ENCODE measurements at regions of chr6 and their contacts with region 1.

Region 1: GRCh38 chr6:151675746-151676416 is 131.6 kb upstream of the ESR1 start:
- DNase-seq: peak; percentile 42
- H3K4me3 Mint-ChIP-seq: no peak overlapping the region
- H3K27ac Mint-ChIP-seq: no peak overlapping the region
- H3K4me1 Mint-ChIP-seq: peaks cover 14% of the 10 kb centered on the region
- H3K27me3 Mint-ChIP-seq: peaks cover 2% of the 10 kb centered on the region

Region 2: GRCh38 chr6:151553416-151554165 is 122.3 kb before region 1 on chr6:
- intact Hi-C with region 1: no loop called
- DNase-seq: no peak
- H3K4me3 Mint-ChIP-seq: no peak overlapping the region
- H3K27ac Mint-ChIP-seq: no peak overlapping the region
- H3K4me1 Mint-ChIP-seq: no peaks in the 10 kb centered on the region
- H3K27me3 Mint-ChIP-seq: no peaks in the 10 kb centered on the region

Region 3: GRCh38 chr6:152124429-152125074 is 448.7 kb after region 1 on chr6:
- intact Hi-C with region 1: loop called (anchors 1 kb)
- DNase-seq: no peak
- H3K4me3 Mint-ChIP-seq: no peak overlapping the region
- H3K27ac Mint-ChIP-seq: no peak overlapping the region
- H3K4me1 Mint-ChIP-seq: no peaks in the 10 kb centered on the region
- H3K27me3 Mint-ChIP-seq: no peaks in the 10 kb centered on the region

Region 4: DNA sequence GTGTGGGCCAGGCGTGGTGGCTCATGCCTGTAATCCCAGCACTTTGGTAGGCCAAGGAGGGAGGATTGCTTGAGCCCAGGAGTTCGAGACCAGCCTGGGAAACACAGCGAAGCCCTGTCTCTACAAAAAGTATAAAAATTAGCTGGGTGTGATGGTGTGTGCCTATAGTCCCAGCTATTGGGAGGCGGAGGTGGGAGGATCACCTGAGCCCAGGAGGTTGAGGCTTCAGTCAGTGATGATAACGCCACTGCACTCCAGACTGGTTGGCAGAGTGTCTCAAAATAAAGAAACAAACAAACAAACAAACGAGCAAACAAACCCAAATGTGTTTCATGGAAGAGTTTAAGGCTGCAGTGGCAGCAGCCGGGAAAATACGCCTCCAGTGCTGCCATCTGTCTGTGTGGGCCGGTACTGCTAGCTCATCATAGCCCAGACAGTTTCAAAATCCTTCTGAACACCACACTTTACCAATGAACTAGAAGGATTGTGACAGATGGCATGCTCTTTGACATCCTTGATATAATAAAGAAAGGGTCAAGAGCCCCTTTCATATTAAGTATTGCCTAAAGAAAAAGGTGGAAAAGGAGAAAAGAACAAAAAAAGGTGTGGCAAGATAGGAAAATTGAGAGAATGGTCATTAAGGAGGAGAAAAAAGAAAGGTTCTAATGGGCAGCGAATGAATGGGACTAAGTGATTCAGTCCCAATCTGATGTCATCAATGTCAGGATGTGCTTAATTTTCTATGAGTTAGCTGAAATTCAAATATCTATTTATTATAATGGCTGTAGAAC is 662.6 kb after region 1 on chr6:
- intact Hi-C with region 1: loop called (anchors 1 kb)
- DNase-seq: peak; percentile 13
- H3K4me3 Mint-ChIP-seq: no peak overlapping the region
- H3K27ac Mint-ChIP-seq: no peak overlapping the region
- H3K4me1 Mint-ChIP-seq: peaks cover 6% of the 10 kb centered on the region
- H3K27me3 Mint-ChIP-seq: peaks cover 18% of the 10 kb centered on the region

Region 5: DNA sequence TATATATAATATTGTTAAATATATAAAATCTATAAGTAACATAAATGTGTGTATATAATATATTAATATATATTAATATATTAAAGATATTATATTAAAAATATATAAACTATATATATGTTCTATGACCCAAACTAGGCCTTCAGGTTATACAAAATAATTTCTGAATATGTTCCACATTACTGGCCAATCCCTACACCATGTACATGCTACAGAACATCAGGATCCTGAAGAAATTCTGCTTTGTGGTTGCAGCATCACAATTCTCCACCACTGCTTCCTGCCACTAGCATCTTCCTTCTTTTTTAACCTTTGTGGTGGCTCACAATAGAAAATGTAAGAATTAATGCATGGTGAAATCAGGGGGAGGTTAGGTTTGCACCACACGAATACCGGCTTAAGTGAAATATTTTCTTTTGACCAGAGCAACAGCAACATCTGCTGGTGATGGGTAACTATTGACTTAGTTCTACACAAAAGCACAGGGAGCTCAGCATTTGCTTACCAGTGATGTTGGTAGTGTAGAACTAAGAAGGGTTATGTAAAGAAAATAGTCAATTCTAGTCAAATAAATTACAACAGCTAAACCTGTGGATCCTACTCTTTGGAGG is 680.7 kb after region 1 on chr6:
- intact Hi-C with region 1: loop called (anchors 5 kb)
- DNase-seq: no peak
- H3K4me3 Mint-ChIP-seq: no peak overlapping the region
- H3K27ac Mint-ChIP-seq: no peak overlapping the region
- H3K4me1 Mint-ChIP-seq: no peaks in the 10 kb centered on the region
- H3K27me3 Mint-ChIP-seq: no peaks in the 10 kb centered on the region